Right ventricle myocardium inferior (tissue), 1 donor: ENCODE measurements at regions of chr1 and their contacts with region 1.

Region 1: GRCh38 chr1:183622884-183623785 is 12.4 kb downstream of the ARPC5 start:
- DNase-seq: peak; percentile 61
- ATAC-seq: peak; percentile 88

Region 2: GRCh38 chr1:183554577-183554976 is 68.6 kb before region 1 on chr1:
- intact Hi-C with region 1: loop called (anchors 2 kb)
- DNase-seq: no peak
- ATAC-seq: no peak